ENCODE measurements at regions of chr3 and their contacts with region 1.

Region 1: DNA sequence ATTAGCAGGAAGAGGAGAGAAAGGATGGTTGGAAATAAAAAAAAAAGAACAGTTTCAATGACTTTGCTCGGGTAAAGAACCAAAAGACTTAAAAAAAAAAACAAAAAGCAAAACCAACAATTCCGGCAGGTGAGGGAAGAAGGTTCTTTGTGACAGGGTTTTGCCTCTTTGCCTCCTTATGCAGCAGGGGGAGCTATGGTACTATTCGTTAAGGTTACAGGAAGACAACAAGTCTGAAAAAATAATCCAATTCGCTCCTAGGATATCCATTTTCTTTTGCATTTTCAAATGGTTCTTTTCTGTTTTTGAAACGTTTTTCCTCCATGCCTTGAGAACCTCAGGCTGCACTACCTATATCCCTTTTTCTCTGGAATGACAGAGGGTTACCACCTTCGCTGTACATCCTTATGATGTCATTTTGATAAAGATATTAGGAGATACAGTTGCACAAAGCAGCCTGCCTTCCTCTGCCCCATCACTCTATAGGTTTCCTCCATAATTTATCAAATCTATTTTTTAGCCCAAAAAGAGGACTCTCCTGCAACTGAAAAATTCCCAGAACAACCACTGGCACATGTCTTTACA is 55.0 kb downstream of the CFAP20DC start:
- DNase-seq: no peak
- H3K4me3 ChIP-seq: no peak overlapping the region
- H3K27me3 ChIP-seq: no peaks in the 10 kb centered on the region
- CTCF ChIP-seq: peak; percentile 88

Region 2: DNA sequence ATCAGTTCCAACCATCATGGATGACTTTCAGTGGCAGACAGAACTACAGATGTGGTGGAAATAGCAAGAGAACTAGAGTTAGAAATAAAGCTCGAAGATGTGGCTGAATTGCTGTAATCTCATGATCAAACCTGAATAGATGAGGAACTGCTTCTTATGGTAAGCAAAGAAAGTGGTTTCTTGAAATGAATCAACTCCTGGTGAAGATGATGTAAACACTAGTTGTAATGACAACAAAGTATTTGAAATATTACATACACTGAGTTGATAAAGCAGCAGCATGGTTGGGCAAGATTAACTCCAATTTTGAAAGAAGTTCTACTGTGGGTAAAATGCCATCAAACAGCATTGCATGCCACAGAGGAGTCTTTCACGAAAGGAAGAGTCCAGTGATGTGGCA is 196.5 kb before region 1 on chr3:
- CTCF ChIA-PET with region 1: no interaction called
- POLR2A ChIA-PET with region 1: no interaction called
- DNase-seq: no peak
- H3K4me3 ChIP-seq: no peak overlapping the region
- H3K27me3 ChIP-seq: no peaks in the 10 kb centered on the region
- CTCF ChIP-seq: no peak

Region 3: GRCh38 chr3:59049671-59050331 is 55.0 kb after region 1 on chr3 and contains the start of gene CFAP20DC:
- CTCF ChIA-PET with region 1: interaction called, 36 read pairs
- POLR2A ChIA-PET with region 1: no interaction called
- DNase-seq: peak; percentile 62
- H3K4me3 ChIP-seq: peak within 1 kb of the TSS; percentile 58
- H3K27me3 ChIP-seq: no peaks in the 10 kb centered on the region
- CTCF ChIP-seq: no peak
- polyA plus RNA-seq, gene CFAP20DC: 0.81 and 2.2 TPM in 2 replicates

Region 4: DNA sequence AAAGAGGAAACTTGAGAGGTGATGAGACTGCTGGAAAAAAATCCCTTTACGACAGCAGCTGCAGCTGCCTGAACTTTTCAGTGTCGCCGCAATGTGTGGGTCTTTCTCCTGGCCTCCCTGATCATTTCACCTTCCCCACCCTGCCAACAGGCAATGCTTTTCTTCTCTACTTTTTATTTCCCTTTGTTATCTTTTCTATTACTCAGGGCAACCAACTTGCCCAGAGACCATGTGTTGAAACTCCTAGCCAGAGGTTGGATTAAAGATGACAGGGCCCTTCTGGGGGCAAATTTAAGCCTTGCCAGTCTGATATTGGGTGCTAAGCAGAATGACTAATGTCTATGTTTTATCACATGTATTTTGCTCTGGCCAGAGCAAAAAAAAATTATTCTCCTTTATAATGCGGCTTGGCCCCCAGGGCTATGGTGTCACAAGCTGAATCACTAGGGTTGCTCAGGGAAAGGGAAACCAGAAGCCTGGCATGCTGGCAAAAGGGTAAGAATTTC is 106.4 kb after region 1 on chr3:
- CTCF ChIA-PET with region 1: no interaction called
- POLR2A ChIA-PET with region 1: no interaction called
- DNase-seq: no peak
- H3K4me3 ChIP-seq: no peak overlapping the region
- H3K27me3 ChIP-seq: no peaks in the 10 kb centered on the region
- CTCF ChIP-seq: no peak